Caco-2 (cell line): ENCODE measurements at regions of chr3 and their contacts with region 1.

Region 1: DNA sequence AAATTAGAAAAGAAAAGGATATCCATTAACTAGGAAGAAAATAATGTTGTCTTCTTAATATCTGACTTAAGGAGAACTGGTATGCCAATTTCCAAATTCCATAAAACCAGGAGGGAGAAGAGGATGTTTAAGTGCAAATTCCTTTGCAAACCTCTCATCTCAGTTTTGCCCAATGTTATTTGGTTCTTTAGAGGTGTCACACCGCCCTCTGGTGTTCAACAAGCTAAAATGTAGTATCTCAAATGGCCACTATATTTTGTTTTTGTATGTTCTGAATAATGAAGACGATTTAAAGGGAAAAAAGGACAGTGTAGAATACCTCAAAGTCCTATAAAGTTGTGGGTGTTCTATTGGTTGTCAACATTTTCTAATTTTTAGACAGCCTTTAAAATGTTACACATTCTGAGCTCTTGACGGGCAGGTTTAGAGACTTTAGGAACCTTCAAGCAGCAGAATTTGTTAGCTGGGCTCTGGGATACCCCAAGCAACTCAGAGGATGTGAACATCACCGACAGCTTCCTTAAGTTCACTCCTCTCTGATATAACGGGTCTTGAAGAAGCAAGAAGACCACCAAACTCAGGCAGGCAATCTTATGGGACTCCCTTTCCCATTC is 458.3 kb downstream of the MFSD1 start:
- DNase-seq: peak; percentile 38 to 53
- H3K4me3 ChIP-seq: no peak overlapping the region
- H3K4me3 Mint-ChIP-seq: no peak overlapping the region
- H3K27ac Mint-ChIP-seq: no peak overlapping the region
- H3K4me1 ChIP-seq: no peaks in the 10 kb centered on the region
- H3K4me1 Mint-ChIP-seq: no peaks in the 10 kb centered on the region
- H3K27me3 ChIP-seq: no peaks in the 10 kb centered on the region
- H3K27me3 Mint-ChIP-seq: peaks cover 9% of the 10 kb centered on the region
- CTCF ChIP-seq: peak; percentile 71 to 74

Region 2: GRCh38 chr3:158845765-158846350 is 414.3 kb before region 1 on chr3:
- CTCF ChIA-PET with region 1: interaction called, 11 read pairs
- POLR2A ChIA-PET with region 1: no interaction called
- intact Hi-C with region 1: loop called (anchors 1 kb)
- DNase-seq: peak in 1 of 2 experiments; percentile 57
- H3K4me3 ChIP-seq: no peak overlapping the region
- H3K4me3 Mint-ChIP-seq: no peak overlapping the region
- H3K27ac Mint-ChIP-seq: no peak overlapping the region
- H3K4me1 ChIP-seq: no peaks in the 10 kb centered on the region
- H3K4me1 Mint-ChIP-seq: no peaks in the 10 kb centered on the region
- H3K27me3 ChIP-seq: no peaks in the 10 kb centered on the region; the same call in 1 of the 2 replicates
- H3K27me3 Mint-ChIP-seq: peaks cover 18% of the 10 kb centered on the region
- CTCF ChIP-seq: peak; percentile 58 to 75

Region 3: DNA sequence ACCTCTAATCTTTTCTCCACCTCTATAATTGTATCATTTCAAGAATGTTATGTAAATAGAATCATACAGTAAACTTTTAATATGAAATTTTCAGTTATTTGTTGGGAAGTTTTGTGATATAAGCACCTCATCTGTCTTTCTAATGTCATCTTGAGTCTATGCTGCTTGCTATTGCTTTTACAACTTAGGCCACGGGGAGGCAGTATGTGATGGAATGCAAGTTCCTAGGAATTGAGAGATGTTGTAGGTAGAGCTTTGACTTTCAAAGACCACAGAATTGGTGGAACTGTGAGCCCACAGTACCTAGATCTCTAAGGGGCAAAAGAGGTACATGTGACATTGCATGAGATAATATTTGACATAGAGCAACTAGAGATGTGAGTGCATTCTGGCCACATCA is 130.0 kb before region 1 on chr3:
- CTCF ChIA-PET with region 1: interaction called, 4 read pairs
- POLR2A ChIA-PET with region 1: no interaction called
- intact Hi-C with region 1: loop called (anchors 2 kb)
- DNase-seq: peak in 1 of 2 experiments; percentile 5
- H3K4me3 ChIP-seq: no peak overlapping the region
- H3K4me3 Mint-ChIP-seq: no peak overlapping the region
- H3K27ac Mint-ChIP-seq: no peak overlapping the region
- H3K4me1 ChIP-seq: no peaks in the 10 kb centered on the region
- H3K4me1 Mint-ChIP-seq: no peaks in the 10 kb centered on the region
- H3K27me3 ChIP-seq: no peaks in the 10 kb centered on the region
- H3K27me3 Mint-ChIP-seq: peaks cover 4% of the 10 kb centered on the region
- CTCF ChIP-seq: peak; percentile 25 to 30

Region 4: DNA sequence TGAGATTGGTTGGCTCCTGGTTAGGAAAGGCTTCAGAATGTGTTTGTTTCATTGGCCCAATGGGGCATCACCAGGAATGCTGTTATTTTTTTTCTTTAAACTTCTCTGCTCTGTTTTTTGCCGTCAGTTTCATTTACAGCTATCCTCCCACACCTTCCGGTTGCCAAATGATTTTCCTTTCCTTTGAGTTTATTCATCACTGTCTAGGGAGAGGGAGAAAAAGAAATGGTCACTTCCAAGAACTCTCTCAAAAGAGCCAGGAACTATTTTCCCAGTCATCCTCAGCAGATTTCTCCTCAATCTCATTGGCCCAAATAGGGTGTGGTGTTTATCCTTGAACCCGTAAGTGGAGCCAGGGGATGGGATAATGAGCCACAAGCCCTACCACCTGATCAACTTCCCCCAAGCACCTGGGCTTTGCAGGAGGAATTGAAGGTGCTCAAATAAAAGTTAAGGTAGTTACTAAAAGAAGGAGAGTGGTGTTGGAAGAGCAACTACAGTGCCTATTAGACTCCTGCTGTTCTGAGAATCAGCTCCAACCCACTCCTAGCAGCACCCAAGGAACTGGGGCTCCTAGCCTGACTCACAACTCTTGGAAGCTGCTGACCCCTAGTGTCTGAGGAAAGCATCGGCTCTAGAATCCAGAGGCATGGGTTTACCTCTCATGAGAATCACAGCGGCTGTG is 544.7 kb after region 1 on chr3:
- CTCF ChIA-PET with region 1: no interaction called
- POLR2A ChIA-PET with region 1: no interaction called
- intact Hi-C with region 1: loop called (anchors 1 kb)
- DNase-seq: peak; percentile 84
- H3K4me3 ChIP-seq: no peak overlapping the region
- H3K4me3 Mint-ChIP-seq: no peak overlapping the region
- H3K27ac Mint-ChIP-seq: no peak overlapping the region
- H3K4me1 ChIP-seq: peaks cover 38% of the 10 kb centered on the region
- H3K4me1 Mint-ChIP-seq: peaks cover 12% of the 10 kb centered on the region
- H3K27me3 ChIP-seq: no peaks in the 10 kb centered on the region
- H3K27me3 Mint-ChIP-seq: no peaks in the 10 kb centered on the region
- CTCF ChIP-seq: peak; percentile 84 to 94

Region 5: DNA sequence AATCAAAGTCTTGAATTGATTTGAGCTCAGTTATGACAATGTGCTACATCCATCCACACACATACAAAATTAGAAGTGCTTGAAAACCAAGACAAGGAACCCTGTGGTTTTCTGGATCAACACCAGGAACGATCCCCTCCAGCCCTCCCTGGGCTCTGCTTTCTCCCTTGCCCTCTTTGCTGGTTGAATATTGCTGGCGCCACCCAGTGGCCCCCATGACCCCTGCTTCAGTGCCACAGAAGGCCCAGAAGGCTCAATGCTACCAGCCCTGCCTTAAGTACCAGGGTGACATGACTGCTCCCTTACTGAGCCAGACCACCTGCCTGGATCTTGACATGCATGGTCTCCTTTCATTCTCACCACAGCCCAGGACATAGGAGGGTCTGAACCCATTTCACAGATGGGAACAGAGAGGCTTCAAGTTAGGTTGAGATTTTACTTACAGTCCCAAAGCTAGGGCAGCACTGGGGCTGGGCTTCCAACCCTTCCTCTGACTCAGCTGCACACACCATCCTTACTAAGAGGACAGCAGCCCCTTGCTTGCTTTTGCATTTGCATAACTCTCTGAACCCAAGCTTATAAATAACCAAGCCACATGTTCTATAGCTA is 743.5 kb after region 1 on chr3:
- CTCF ChIA-PET with region 1: no interaction called
- POLR2A ChIA-PET with region 1: no interaction called
- intact Hi-C with region 1: loop called (anchors 1 kb)
- DNase-seq: peak; percentile 58 to 67
- H3K4me3 ChIP-seq: no peak overlapping the region
- H3K4me3 Mint-ChIP-seq: no peak overlapping the region
- H3K27ac Mint-ChIP-seq: no peak overlapping the region
- H3K4me1 ChIP-seq: peaks cover 6% of the 10 kb centered on the region; the same call in 1 of the 2 replicates
- H3K4me1 Mint-ChIP-seq: no peaks in the 10 kb centered on the region
- H3K27me3 ChIP-seq: no peaks in the 10 kb centered on the region
- H3K27me3 Mint-ChIP-seq: no peaks in the 10 kb centered on the region
- CTCF ChIP-seq: peak; percentile 42 to 62